Mammary epithelial cell (primary cell): ENCODE measurements at regions of chr11 and their contacts with region 1.

Region 1: GRCh38 chr11:3797329-3798095 is at the start of gene NUP98:
- DNase-seq: peak; percentile 100
- H3K4me3 ChIP-seq: peak within 1 kb of the TSS; percentile 75 to 92 (median 85)
- H3K27ac ChIP-seq: peak within 1 kb of the TSS; percentile 95
- H3K4me1 ChIP-seq: peaks cover 8% of the 10 kb centered on the region
- H3K27me3 ChIP-seq: no peaks in the 10 kb centered on the region
- CTCF ChIP-seq: no peak
- total RNA-seq, gene NUP98: 73.6 to 108 TPM

Region 2: DNA sequence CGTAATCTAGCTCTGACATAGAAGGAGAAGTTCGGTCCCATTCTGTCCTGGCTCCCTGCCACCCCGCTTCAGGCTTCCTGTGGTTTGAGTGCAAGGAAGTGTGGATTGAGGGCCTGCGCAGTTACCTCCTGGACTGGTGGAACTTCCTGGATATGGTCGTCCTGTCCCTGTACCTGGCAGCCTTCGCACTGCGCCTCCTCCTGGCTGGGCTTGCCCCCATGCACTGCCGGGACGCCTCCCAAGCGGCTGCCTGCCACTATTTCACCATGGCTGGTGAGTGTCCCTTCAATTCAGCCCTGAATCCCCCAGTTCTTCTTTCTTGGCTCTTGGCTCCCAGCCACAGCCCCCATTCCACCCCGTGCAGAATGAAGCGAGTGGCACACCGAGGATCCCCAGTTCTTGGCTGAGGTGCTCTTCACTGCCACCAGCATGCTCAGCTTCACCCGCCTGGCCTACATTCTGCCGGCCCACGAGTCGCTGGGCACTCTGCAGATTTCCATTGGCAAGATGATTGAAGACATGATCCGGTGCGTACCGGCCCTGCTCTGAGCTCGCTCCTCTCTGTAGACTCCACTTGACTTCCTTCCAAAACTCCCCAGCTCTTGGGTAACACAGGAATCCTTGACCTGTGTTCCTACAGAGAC is 171.1 kb before region 1 on chr11:
- CTCF ChIA-PET with region 1: no interaction called
- dilution Hi-C with region 1: no loop called
- in situ Hi-C with region 1: no loop called
- intact Hi-C with region 1: no loop called
- DNase-seq: no peak
- H3K4me3 ChIP-seq: no peak overlapping the region
- H3K27ac ChIP-seq: no peak overlapping the region
- H3K4me1 ChIP-seq: no peaks in the 10 kb centered on the region
- H3K27me3 ChIP-seq: no peaks in the 10 kb centered on the region
- CTCF ChIP-seq: no peak

Region 3: GRCh38 chr11:3735827-3736226 is 61.7 kb before region 1 on chr11:
- CTCF ChIA-PET with region 1: no interaction called
- dilution Hi-C with region 1: no loop called
- in situ Hi-C with region 1: no loop called
- intact Hi-C with region 1: no loop called
- DNase-seq: peak; percentile 31
- H3K4me3 ChIP-seq: no peak overlapping the region
- H3K27ac ChIP-seq: no peak overlapping the region
- H3K4me1 ChIP-seq: no peaks in the 10 kb centered on the region
- H3K27me3 ChIP-seq: no peaks in the 10 kb centered on the region
- CTCF ChIP-seq: no peak

Region 4: GRCh38 chr11:3767536-3767935 is 30.0 kb before region 1 on chr11:
- CTCF ChIA-PET with region 1: no interaction called
- dilution Hi-C with region 1: loop called (anchors 5 kb)
- in situ Hi-C with region 1: no loop called
- intact Hi-C with region 1: no loop called
- DNase-seq: no peak
- H3K4me3 ChIP-seq: no peak overlapping the region
- H3K27ac ChIP-seq: no peak overlapping the region
- H3K4me1 ChIP-seq: no peaks in the 10 kb centered on the region
- H3K27me3 ChIP-seq: no peaks in the 10 kb centered on the region
- CTCF ChIP-seq: no peak

Region 5: GRCh38 chr11:3841426-3842350 is 44.2 kb after region 1 on chr11:
- CTCF ChIA-PET with region 1: no interaction called
- dilution Hi-C with region 1: no loop called
- in situ Hi-C with region 1: no loop called
- intact Hi-C with region 1: loop called (anchors 1 kb)
- DNase-seq: no peak
- H3K4me3 ChIP-seq: peak overlapping the region; percentile 44 to 78 (median 71)
- H3K27ac ChIP-seq: peak overlapping the region; percentile 67
- H3K4me1 ChIP-seq: peaks cover 27% of the 10 kb centered on the region
- H3K27me3 ChIP-seq: no peaks in the 10 kb centered on the region
- CTCF ChIP-seq: peak; percentile 51 to 90